ENCODE measurements at regions of chr5 and their contacts with region 1.

Region 1: GRCh38 chr5:97162045-97162444 is 19.6 kb upstream of the LIX1 start:
- DNase-seq: peak in 1 of 2 donors; percentile 71
- ATAC-seq: peak in 6 of 8 donors; percentile 43 to 77 (median 68)
- H3K4me3 ChIP-seq: no peak overlapping the region
- H3K27ac ChIP-seq: no peak overlapping the region
- H3K4me1 ChIP-seq: peaks cover 0 to 10% (median 0%) of the 10 kb centered on the region in 9 donors
- H3K27me3 ChIP-seq: no peaks in the 10 kb centered on the region
- CTCF ChIP-seq: peak; percentile 70 to 93 (median 89)

Region 2: DNA sequence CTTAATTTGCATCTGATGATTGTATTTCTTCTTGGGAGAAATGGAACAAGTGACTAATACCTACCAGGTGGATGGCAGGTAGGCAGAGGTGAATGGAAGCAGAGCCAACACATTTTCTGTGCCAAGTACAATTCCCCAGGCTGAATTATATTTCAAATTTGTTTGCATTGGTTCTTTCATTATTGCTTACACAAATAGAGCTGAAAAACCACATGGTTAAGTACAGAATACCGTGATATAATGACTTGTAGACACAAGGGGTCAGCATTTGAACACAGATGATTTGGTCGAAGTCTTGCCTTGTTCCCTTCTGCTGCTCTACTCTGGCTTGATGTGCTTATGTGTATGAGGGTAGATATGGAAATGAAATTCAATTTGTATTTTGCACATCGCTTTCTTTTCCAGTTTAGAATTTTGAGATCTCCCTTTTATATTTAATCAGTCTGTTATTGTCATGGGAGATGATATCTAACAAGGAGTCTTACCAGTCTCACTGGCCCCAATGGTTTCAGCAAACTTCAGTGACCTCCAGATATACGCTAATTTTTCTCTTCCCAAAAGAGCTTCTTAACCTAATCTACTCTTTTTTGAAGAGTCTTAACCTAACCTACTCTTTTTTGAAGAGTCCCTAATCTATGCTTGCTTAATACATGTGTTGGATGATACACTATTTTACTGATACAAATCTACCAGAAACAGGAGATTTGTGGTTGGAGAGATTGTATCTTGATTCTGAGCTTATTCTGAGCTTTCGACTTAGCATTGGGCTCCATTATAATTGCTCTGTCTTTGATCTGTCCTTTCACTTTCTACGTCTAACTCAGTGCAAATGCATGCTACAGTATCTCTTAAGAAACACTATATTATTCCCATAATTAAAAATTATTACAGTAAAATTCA is 817.1 kb before region 1 on chr5:
- intact Hi-C with region 1: loop called in 1 of 10 experiments (anchors 10 kb)
- DNase-seq: peak in 1 of 2 donors; percentile 25
- ATAC-seq: peak in 7 of 8 donors; percentile 64 to 91 (median 85)
- H3K4me3 ChIP-seq: no peak overlapping the region
- H3K27ac ChIP-seq: no peak overlapping the region
- H3K4me1 ChIP-seq: peaks cover 0 to 11% (median 2%) of the 10 kb centered on the region in 9 donors
- H3K27me3 ChIP-seq: no peaks in the 10 kb centered on the region
- CTCF ChIP-seq: peak; percentile 16 to 74 (median 61)

Region 3: DNA sequence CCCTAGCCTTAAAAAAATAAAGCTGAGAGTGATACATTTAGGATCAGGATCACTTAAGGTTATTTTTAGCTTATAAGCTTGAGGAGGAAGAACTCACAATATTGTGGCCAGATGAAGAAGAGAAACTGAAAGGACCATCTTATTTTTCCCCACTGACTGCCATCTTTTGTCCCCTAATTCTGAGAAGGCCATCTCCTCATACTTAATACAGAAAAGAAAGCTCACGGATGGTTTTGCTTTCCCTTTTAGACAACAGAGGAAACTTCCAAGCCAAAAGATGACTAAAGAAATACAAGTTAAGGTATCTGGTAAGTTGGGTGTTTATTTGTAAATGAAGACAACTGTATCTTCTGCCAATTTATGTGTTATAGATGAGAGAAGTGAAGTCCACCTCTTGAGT is 390.6 kb before region 1 on chr5:
- intact Hi-C with region 1: loop called in 1 of 10 experiments (anchors 5 kb)
- DNase-seq: no peak
- ATAC-seq: no peak
- H3K4me3 ChIP-seq: no peak overlapping the region
- H3K27ac ChIP-seq: peak overlapping the region in 2 of 10 donors; percentile 5 to 49
- H3K4me1 ChIP-seq: peaks cover 0 to 16% (median under 1%) of the 10 kb centered on the region in 9 donors
- H3K27me3 ChIP-seq: no peaks in the 10 kb centered on the region
- CTCF ChIP-seq: no peak

Region 4: DNA sequence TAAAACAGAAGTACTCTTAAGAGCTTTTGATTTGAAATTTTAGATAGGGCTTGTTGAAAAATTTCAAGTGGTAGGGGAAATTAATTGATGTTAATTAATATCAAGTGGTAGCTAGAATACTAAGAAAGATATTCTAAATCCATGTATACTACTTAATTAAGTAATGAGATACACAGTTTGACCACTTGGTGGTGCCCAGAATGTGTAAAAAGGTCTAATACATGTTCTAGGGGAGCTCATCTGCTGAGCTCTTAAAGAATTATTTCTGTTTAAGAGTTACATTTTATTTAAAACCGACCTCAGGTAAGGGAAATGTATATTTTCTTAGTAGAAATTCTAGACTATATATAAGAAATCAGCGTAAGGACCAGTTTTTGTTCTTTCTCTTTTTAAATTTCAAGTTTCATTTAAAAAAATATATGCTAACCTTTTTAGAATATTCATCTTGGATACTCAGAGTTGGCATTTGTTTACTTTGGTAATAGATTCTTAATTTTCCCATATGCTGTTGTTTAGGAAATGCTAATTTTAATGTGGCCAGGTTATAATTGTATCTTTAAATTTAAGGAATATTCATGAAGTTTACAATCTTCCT is 164.7 kb before region 1 on chr5:
- intact Hi-C with region 1: loop called in 5 of 10 experiments (anchors 5 to 10 kb)
- DNase-seq: peak in 1 of 2 donors; percentile 13
- ATAC-seq: peak in 1 of 8 donors; percentile 58
- H3K4me3 ChIP-seq: no peak overlapping the region
- H3K27ac ChIP-seq: no peak overlapping the region
- H3K4me1 ChIP-seq: no peaks in the 10 kb centered on the region
- H3K27me3 ChIP-seq: no peaks in the 10 kb centered on the region
- CTCF ChIP-seq: peak; percentile 5 to 62 (median 50)

Region 5: GRCh38 chr5:97044052-97044451 is 118.0 kb before region 1 on chr5:
- intact Hi-C with region 1: loop called in 1 of 10 experiments (anchors 2 kb)
- DNase-seq: peak; percentile 10 to 16
- ATAC-seq: peak; percentile 61 to 87 (median 82)
- H3K4me3 ChIP-seq: no peak overlapping the region
- H3K27ac ChIP-seq: no peak overlapping the region
- H3K4me1 ChIP-seq: peaks cover 0 to 8% (median 0%) of the 10 kb centered on the region in 9 donors
- H3K27me3 ChIP-seq: no peaks in the 10 kb centered on the region
- CTCF ChIP-seq: peak; percentile 8 to 65 (median 51)